Adrenal gland (tissue), 19 donors: ENCODE measurements at regions of chr10 and their contacts with region 1.

Region 1: GRCh38 chr10:69639291-69640195 is 9.5 kb downstream of the FAM241B start:
- DNase-seq: peak; percentile 31 to 84 (median 64)
- H3K4me3 ChIP-seq: no peak overlapping the region
- H3K27ac ChIP-seq: no peak overlapping the region
- H3K4me1 ChIP-seq: no peaks in the 10 kb centered on the region
- H3K27me3 ChIP-seq: no peaks in the 10 kb centered on the region
- CTCF ChIP-seq: peak; percentile 70 to 90 (median 84)
- POLR2A ChIP-seq: no peak

Region 2: GRCh38 chr10:69425511-69426298 is 213.8 kb before region 1 on chr10:
- intact Hi-C with region 1: loop called (anchors 5 to 10 kb)
- DNase-seq: no peak
- H3K4me3 ChIP-seq: no peak overlapping the region
- H3K27ac ChIP-seq: no peak overlapping the region
- H3K4me1 ChIP-seq: no peaks in the 10 kb centered on the region
- H3K27me3 ChIP-seq: no peaks in the 10 kb centered on the region
- CTCF ChIP-seq: no peak
- POLR2A ChIP-seq: no peak

Region 3: GRCh38 chr10:69515699-69516259 is 123.8 kb before region 1 on chr10:
- intact Hi-C with region 1: loop called (anchors 2 kb)
- DNase-seq: peak; percentile 66 to 89 (median 78)
- H3K4me3 ChIP-seq: no peak overlapping the region
- H3K27ac ChIP-seq: no peak overlapping the region
- H3K4me1 ChIP-seq: no peaks in the 10 kb centered on the region
- H3K27me3 ChIP-seq: no peaks in the 10 kb centered on the region
- CTCF ChIP-seq: peak; percentile 70 to 86 (median 78)
- POLR2A ChIP-seq: no peak

Region 4: GRCh38 chr10:69716711-69717560 is 77.4 kb after region 1 on chr10:
- intact Hi-C with region 1: loop called in 1 of 2 experiments (anchors 10 kb)
- DNase-seq: peak; percentile 33 to 69 (median 59)
- H3K4me3 ChIP-seq: no peak overlapping the region
- H3K27ac ChIP-seq: no peak overlapping the region
- H3K4me1 ChIP-seq: no peaks in the 10 kb centered on the region
- H3K27me3 ChIP-seq: peaks cover 3% of the 10 kb centered on the region
- CTCF ChIP-seq: peak in 5 of 6 experiments; percentile 57 to 61 (median 60)
- POLR2A ChIP-seq: no peak

Region 5: GRCh38 chr10:69800109-69800508 is 160.6 kb after region 1 on chr10:
- intact Hi-C with region 1: loop called in 1 of 2 experiments (anchors 10 kb)
- DNase-seq: peak; percentile 33 to 61 (median 42)
- H3K4me3 ChIP-seq: no peak overlapping the region
- H3K27ac ChIP-seq: no peak overlapping the region
- H3K4me1 ChIP-seq: peaks cover 13 to 19% of the 10 kb centered on the region in 2 donors
- H3K27me3 ChIP-seq: peaks cover 25% of the 10 kb centered on the region
- CTCF ChIP-seq: peak; percentile 41 to 62 (median 54)
- POLR2A ChIP-seq: no peak

Region 6: DNA sequence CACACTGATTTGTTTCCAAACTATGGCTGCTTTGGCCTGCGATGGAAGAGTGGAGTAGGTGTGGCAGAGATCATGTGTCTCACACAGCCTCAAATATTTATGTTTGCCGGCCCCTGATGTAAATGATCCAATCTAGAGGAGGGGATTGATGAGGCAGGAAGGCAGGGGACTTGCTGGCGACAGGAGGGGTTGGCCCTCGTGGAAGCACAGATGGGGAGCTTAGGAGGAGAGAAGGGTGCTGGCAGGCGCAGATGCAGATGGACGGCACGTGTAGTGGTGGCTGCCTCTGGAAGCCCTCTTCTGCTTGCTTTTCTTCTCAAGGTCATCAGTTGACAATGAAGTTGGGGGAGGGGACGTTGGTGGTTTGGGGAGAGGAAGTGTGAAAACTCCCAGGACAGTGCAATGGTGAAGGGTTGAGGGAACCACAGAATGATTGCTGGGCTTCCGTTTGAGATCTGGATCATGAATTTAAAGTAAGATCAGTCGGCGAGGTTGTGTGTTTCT is 177.6 kb after region 1 on chr10:
- intact Hi-C with region 1: no loop called
- DNase-seq: no peak
- H3K4me3 ChIP-seq: no peak overlapping the region
- H3K27ac ChIP-seq: no peak overlapping the region
- H3K4me1 ChIP-seq: no peaks in the 10 kb centered on the region
- H3K27me3 ChIP-seq: no peaks in the 10 kb centered on the region
- CTCF ChIP-seq: no peak
- POLR2A ChIP-seq: no peak

Region 7: GRCh38 chr10:69914398-69915214 is 275.1 kb after region 1 on chr10:
- intact Hi-C with region 1: loop called (anchors 5 to 10 kb)
- DNase-seq: peak; percentile 49 to 83 (median 73)
- H3K4me3 ChIP-seq: no peak overlapping the region
- H3K27ac ChIP-seq: no peak overlapping the region
- H3K4me1 ChIP-seq: no peaks in the 10 kb centered on the region
- H3K27me3 ChIP-seq: no peaks in the 10 kb centered on the region
- CTCF ChIP-seq: peak; percentile 77 to 96 (median 92)
- POLR2A ChIP-seq: no peak